Caco-2 (cell line): ENCODE measurements at regions of chr12 and their contacts with region 1.

Region 1: GRCh38 chr12:29380536-29381523 is at the start of gene ERGIC2:
- DNase-seq: peak; percentile 97
- H3K4me3 ChIP-seq: peak within 1 kb of the TSS; percentile 72
- H3K4me3 Mint-ChIP-seq: peak within 1 kb of the TSS; percentile 98
- H3K27ac Mint-ChIP-seq: peak within 1 kb of the TSS; percentile 98
- H3K4me1 ChIP-seq: peaks cover 11% of the 10 kb centered on the region; the same call in 1 of the 2 replicates
- H3K4me1 Mint-ChIP-seq: peaks cover 14% of the 10 kb centered on the region
- H3K27me3 ChIP-seq: no peaks in the 10 kb centered on the region
- H3K27me3 Mint-ChIP-seq: no peaks in the 10 kb centered on the region
- CTCF ChIP-seq: no peak
- total RNA-seq, gene ERGIC2: 111 and 128 TPM in 2 replicates

Region 2: DNA sequence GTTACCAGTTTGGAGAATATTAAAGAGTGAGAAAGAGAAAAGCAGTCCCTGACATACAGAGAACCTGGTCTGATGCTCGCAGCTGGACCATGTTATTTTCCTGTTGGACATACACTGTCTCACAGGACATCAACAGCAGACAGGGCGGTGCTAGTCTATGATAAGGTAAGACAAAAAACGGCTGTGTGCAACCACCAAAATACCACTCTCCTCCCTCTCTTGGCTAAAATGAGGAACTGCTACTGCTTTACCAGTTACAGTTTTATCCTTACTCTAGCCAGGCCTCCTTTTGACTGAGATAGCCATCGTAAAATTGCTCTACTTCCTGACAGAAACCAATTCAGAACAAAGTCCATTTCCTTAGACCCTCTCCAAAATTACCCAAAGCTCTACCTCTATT is 47.1 kb after region 1 on chr12:
- CTCF ChIA-PET with region 1: no interaction called
- POLR2A ChIA-PET with region 1: no interaction called
- intact Hi-C with region 1: loop called (anchors 1 kb)
- DNase-seq: peak in 1 of 2 experiments; percentile 22
- H3K4me3 ChIP-seq: no peak overlapping the region
- H3K4me3 Mint-ChIP-seq: no peak overlapping the region
- H3K27ac Mint-ChIP-seq: no peak overlapping the region
- H3K4me1 ChIP-seq: no peaks in the 10 kb centered on the region
- H3K4me1 Mint-ChIP-seq: no peaks in the 10 kb centered on the region
- H3K27me3 ChIP-seq: no peaks in the 10 kb centered on the region
- H3K27me3 Mint-ChIP-seq: peaks cover 3% of the 10 kb centered on the region
- CTCF ChIP-seq: peak; percentile 17 to 55